Activated T-helper 2 cell treated with anti-CD3 and anti-CD28 coated beads, Interferon-gamma antibody, Interleukin-2, Interleukin-4, amounts not matched to agents 10 μg/mL and 5 μg/mL and 100 μg/mL, durations not matched to agents 14 hours and 24 hours and 36 hours (primary cell): ENCODE measurements at regions of chr4 and their contacts with region 1.

Region 1: GRCh38 chr4:27000820-27001219 is 140.2 kb downstream of the STIM2 start:
- DNase-seq: no peak
- H3K4me3 Mint-ChIP-seq: no peak overlapping the region
- H3K27ac Mint-ChIP-seq: no peak overlapping the region
- H3K4me1 Mint-ChIP-seq: peaks cover 28% of the 10 kb centered on the region
- H3K27me3 Mint-ChIP-seq: no peaks in the 10 kb centered on the region

Region 2: DNA sequence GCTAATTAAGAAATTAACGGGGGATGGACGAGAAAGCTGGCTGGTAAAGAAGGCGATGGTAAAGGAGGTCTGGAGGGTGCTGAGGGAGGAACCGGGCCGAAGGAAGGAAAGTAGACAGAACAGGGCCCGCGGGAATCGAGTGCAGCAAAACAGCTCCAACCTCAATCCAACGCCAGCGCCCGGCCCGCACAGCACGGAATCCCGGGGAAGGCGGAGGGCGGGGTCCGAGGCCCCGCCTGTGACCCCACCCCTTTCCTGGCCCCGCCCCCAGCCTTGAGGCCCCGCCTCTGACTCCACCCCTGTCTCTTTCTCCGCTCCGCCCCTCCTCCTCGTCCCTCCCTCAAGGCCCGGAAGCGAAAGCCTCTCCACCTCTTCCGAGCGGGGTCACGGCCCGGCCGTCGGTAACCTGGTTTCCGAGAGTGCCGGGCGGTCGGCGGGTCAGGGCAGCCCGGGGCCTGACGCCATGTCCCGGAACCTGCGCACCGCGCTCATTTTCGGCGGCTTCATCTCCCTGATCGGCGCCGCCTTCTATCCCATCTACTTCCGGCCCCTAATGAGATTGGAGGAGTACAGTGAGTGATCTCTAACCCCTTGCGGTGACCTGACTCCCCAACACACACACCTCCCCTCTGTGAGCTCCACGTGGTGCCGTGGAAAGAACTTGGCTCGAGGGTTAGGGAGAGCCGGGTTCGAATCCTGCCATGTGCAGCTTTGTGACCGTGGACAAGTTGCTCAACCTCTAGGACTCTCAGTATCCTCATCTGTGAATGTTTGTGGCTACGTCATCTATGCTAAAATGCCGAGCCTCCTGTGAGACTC is 1086.8 kb before region 1 on chr4 and contains the start of gene SMIM20:
- intact Hi-C with region 1: loop called (anchors 10 kb)
- DNase-seq: peak; percentile 90
- H3K4me3 Mint-ChIP-seq: peak within 1 kb of the TSS; percentile 92
- H3K27ac Mint-ChIP-seq: peak within 1 kb of the TSS; percentile 98
- H3K4me1 Mint-ChIP-seq: peaks cover 21% of the 10 kb centered on the region
- H3K27me3 Mint-ChIP-seq: peaks cover 12% of the 10 kb centered on the region
- total RNA-seq, gene SMIM20: 17.0 and 18.7 TPM in 2 replicates

Region 3: GRCh38 chr4:26015133-26015651 is 985.6 kb before region 1 on chr4:
- intact Hi-C with region 1: loop called (anchors 10 kb)
- DNase-seq: no peak
- H3K4me3 Mint-ChIP-seq: no peak overlapping the region
- H3K27ac Mint-ChIP-seq: no peak overlapping the region
- H3K4me1 Mint-ChIP-seq: peaks cover 55% of the 10 kb centered on the region
- H3K27me3 Mint-ChIP-seq: peaks cover 3% of the 10 kb centered on the region

Region 4: GRCh38 chr4:26583865-26584652 is 416.8 kb before region 1 on chr4 and contains the start of gene TBC1D19:
- intact Hi-C with region 1: loop called (anchors 5 kb)
- DNase-seq: peak; percentile 86
- H3K4me3 Mint-ChIP-seq: peak within 1 kb of the TSS; percentile 93
- H3K27ac Mint-ChIP-seq: peak within 1 kb of the TSS; percentile 79
- H3K4me1 Mint-ChIP-seq: peaks cover 25% of the 10 kb centered on the region
- H3K27me3 Mint-ChIP-seq: no peaks in the 10 kb centered on the region
- total RNA-seq, gene TBC1D19: 4.5 TPM in 2 replicates

Region 5: DNA sequence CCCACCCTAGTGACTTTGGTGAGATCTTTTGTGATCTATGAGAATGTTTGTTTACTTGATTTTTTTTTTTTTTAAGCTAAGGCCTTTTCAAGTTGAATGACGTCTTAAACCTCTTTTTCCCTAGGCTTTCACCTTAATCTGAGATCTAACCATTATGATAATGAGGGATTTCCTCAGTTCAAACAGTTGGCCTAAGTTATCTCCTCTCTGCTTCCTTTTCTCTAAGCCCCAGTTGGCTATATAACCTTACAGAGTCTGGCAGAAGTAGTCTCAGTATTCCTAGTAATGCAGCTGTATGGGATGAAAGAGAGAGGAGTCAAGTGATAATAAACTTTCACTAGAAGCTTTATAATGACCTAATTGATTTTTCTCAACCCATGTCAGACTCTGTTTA is 41.2 kb before region 1 on chr4:
- intact Hi-C with region 1: loop called (anchors 2 kb)
- DNase-seq: no peak
- H3K4me3 Mint-ChIP-seq: no peak overlapping the region
- H3K27ac Mint-ChIP-seq: peak overlapping the region; percentile 50
- H3K4me1 Mint-ChIP-seq: peaks cover 25% of the 10 kb centered on the region
- H3K27me3 Mint-ChIP-seq: no peaks in the 10 kb centered on the region